Dorsolateral prefrontal cortex (tissue), 120 donors: ENCODE measurements at regions of chr17 and their contacts with region 1.

Region 1: DNA sequence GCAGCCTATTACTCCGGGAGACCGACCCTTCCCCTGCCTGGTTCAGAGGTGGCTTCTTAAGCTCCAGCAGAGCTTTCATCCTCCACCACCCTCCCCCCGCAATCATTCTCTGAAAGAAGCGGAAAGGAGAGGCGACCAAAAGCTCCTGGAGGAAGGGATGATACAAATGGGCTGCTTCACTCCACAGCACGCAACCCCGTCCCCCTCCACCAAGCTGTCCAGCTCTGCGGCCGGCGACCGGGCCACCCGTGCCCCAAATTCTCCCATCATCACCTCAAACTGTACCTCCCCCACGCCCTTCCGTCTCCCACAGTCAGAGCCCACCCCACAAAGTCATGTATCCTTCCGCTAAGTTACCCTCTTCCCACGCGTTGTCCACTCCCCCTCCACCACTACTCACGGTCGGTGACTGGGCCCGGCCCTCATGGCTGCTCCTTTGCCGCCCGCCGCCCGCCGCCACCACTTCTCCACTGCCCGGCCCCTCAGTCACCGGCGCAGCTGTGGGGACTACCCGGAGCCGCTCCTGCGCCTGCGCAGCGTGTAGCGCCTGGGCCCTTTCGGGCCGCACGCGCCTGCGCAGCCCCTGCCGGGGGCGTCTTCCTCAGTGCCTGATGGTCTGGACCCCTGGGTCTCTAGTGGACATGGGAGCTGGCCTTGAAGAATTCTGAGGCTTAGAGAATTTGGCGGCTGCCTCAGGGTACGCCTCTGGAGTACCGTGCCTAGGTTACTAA is at the start of gene FAM222B:
- DNase-seq: peak; percentile 63 to 92 (median 76)
- H3K4me3 ChIP-seq: peak within 1 kb of the TSS; percentile 42 to 96 (median 84)
- H3K27ac ChIP-seq: peak within 1 kb of the TSS in 58 of 59 donors; percentile 12 to 95 (median 83)
- H3K27me3 ChIP-seq: no peaks in the 10 kb centered on the region
- CTCF ChIP-seq: peak in 40 of 56 donors; percentile 14 to 60 (median 33)
- total RNA-seq, gene FAM222B: 17.4 to 36.2 (median 25.3) TPM

Region 2: DNA sequence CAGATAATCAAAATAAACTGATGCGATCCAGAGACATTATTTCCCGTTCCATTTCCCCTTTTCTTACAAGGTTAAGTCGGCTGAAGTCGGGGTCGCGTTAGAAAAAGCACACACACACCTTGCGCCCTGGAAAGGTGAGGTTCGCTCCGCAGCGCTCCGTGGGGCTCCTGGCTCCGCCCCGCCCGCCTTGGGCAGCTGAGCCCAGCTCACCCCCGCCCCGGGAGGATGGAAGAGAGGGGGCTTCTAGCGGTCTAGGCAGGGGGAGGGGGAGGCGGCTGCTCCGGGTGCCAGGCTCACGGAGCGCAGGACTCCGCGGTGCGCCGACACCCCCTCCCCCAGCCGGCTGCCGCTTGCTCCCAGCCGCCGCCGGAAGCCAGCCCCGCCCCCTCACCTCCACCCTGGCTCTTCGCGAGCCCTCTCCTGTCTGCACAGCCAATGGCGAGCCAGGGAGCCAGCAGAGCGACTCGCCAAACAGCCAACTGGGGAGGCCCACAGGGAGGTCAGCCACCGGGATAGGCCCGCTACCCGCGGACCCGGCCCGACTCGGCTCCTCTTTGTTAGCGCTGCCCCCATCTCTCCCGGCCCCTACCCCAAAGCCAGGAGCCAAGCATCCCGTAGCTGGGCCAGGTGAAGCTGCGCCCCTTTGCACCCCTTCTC is 30.2 kb before region 1 on chr17:
- intact Hi-C with region 1: loop called in 1 of 2 experiments (anchors 5 kb)
- DNase-seq: peak; percentile 95 to 99 (median 98)
- H3K4me3 ChIP-seq: peak overlapping the region; percentile 70 to 98 (median 90)
- H3K27ac ChIP-seq: peak overlapping the region; percentile 68 to 99 (median 93)
- H3K27me3 ChIP-seq: no peaks in the 10 kb centered on the region
- CTCF ChIP-seq: peak in 8 of 56 donors; percentile 4 to 45 (median 19)

Region 3: GRCh38 chr17:28896884-28897768 is 54.7 kb after region 1 on chr17 and contains the start of gene FLOT2:
- intact Hi-C with region 1: loop called in 1 of 2 experiments (anchors 5 kb)
- DNase-seq: peak in 8 of 10 donors; percentile 31 to 75 (median 55)
- H3K4me3 ChIP-seq: peak within 1 kb of the TSS; percentile 41 to 97 (median 88)
- H3K27ac ChIP-seq: peak within 1 kb of the TSS; percentile 59 to 99 (median 95)
- H3K27me3 ChIP-seq: no peaks in the 10 kb centered on the region
- CTCF ChIP-seq: peak in 34 of 56 donors; percentile 6 to 56 (median 28)
- total RNA-seq, gene FLOT2: 50.7 to 182 (median 108) TPM

Region 4: GRCh38 chr17:28925912-28926365 is 83.5 kb after region 1 on chr17:
- intact Hi-C with region 1: no loop called
- DNase-seq: no peak
- H3K4me3 ChIP-seq: no peak overlapping the region
- H3K27ac ChIP-seq: peak overlapping the region in 13 of 59 donors; percentile 0 to 72 (median 28)
- H3K27me3 ChIP-seq: no peaks in the 10 kb centered on the region
- CTCF ChIP-seq: no peak

Region 5: DNA sequence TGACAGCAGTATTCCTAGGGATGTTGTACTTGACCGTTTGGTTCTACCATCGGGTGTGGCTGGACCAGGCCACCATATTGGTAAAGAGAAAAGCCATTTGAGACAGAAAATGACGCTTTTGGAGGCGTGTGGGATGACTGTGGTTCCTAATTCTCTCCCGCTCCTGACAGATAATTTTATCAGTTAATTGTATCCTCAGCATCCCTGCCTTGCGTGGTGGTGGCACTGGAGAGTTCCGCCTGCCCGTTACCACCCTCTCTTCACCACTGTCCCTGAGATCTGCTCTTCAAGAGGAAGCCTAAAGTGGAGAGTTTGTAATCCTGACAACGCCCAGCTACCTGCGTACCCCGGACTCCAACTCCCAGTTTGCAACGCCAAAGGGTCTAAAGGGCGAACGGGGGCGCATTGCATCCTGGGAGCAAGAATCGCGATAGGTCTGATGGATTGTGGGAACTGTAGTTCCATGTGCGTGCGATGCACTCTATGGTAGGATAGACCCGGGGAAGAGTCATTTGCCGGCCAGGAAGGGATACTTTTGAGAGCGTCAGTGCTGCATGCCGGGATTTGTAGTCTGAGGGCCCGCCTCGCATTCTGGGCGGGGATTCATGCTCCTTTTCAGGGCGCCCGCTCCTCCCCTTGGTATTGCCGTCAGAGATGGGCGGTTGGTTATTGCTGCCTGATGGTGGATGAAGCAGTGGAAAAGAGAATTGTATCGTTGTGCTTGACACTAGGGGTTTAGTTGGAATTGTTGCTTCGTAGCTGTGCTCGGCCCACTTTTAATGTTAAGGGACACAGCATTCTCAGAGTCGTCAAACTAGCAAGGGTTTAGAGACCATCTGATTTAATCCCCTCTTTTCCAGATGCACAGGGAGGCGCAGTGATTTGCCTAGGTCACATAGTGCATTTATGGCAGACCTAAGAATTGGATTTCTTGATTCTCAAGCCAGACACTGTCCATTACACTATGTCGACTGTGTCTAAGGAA is 109.8 kb after region 1 on chr17:
- intact Hi-C with region 1: loop called in 1 of 2 experiments (anchors 5 kb)
- DNase-seq: peak; percentile 97 to 100 (median 98)
- H3K4me3 ChIP-seq: peak overlapping the region; percentile 65 to 99 (median 86)
- H3K27ac ChIP-seq: peak overlapping the region; percentile 93 to 100 (median 100)
- H3K27me3 ChIP-seq: no peaks in the 10 kb centered on the region
- CTCF ChIP-seq: peak in 38 of 56 donors; percentile 7 to 55 (median 28)